ENCODE measurements at regions of chr11 and their contacts with region 1.

Region 1: DNA sequence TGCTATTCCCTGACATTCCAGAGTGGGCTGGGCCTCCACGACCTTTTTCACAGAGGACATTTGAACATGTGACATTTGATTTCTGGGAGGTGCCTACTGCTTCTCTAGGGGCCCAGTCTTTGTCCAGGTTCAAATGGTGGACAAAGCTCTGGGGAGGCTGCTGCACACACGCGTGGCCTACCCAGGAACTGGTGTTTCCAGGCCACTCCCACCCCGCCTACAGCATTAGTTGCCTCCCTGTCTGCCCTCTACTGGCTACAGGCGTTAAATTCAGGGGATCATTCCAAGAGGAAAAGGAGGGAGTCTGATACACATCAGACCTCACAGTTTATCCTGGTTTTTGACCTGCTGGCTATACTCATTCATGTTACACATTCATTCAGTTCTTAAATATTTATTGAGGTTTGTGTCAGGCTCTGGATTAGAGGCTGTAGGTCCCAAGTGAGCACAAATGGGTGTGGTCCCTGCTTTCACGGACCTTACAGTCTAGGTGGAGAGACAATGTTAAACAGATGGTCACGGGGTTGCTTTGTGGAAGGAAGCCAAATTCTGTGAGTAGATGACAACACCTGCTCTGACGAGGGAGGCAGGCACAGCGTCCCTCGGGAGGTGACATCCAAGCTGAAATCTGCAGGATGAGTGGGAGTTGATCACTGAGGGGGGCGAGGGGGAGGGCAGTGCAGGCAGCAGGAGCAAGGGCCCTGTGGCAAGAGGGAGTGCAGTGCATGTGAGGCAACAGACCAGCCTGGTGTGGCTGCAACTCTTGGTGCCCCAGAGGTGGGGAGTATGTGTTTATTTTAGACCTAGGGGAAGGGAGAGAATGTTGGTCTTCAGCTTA is 11.8 kb downstream of the TUB start:
- DNase-seq: peak; percentile 76
- H3K4me3 Mint-ChIP-seq: no peak overlapping the region
- H3K27ac Mint-ChIP-seq: no peak overlapping the region
- H3K4me1 Mint-ChIP-seq: no peaks in the 10 kb centered on the region
- H3K27me3 Mint-ChIP-seq: no peaks in the 10 kb centered on the region
- CTCF ChIP-seq: peak; percentile 50

Region 2: DNA sequence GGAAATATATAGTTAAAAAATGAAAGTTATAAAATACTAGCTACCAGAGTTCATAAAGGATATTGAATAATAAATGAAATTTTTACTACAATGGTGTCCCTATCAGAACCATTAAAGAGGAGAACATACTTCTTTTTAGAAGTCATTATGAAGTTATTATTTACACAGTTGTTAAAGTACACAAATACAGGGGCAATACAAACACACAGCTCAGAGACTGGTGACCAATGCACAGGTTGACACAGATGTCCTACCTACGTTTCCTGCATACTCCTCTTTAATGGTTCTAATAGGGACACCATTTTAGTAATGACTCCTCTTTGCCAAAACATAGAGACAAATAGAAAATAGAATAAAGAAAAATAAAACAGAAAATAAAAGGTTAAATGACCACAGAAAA is 137.6 kb before region 1 on chr11:
- CTCF ChIA-PET with region 1: no interaction called
- POLR2A ChIA-PET with region 1: no interaction called
- intact Hi-C with region 1: no loop called
- DNase-seq: no peak
- H3K4me3 Mint-ChIP-seq: no peak overlapping the region
- H3K27ac Mint-ChIP-seq: no peak overlapping the region
- H3K4me1 Mint-ChIP-seq: no peaks in the 10 kb centered on the region
- H3K27me3 Mint-ChIP-seq: no peaks in the 10 kb centered on the region
- CTCF ChIP-seq: no peak

Region 3: GRCh38 chr11:7965386-7965785 is 127.4 kb before region 1 on chr11 and contains the start of gene NLRP10:
- CTCF ChIA-PET with region 1: no interaction called
- POLR2A ChIA-PET with region 1: no interaction called
- intact Hi-C with region 1: no loop called
- DNase-seq: no peak
- H3K4me3 Mint-ChIP-seq: no peak within 1 kb of the TSS
- H3K27ac Mint-ChIP-seq: peak within 1 kb of the TSS; percentile 50
- H3K4me1 Mint-ChIP-seq: peaks cover 27% of the 10 kb centered on the region
- H3K27me3 Mint-ChIP-seq: no peaks in the 10 kb centered on the region
- CTCF ChIP-seq: no peak
- total RNA-seq, gene NLRP10: 0.42 and 1.3 TPM in 2 replicates

Region 4: GRCh38 chr11:8018484-8019313 is 74.1 kb before region 1 on chr11:
- CTCF ChIA-PET with region 1: interaction called, 64 read pairs
- POLR2A ChIA-PET with region 1: no interaction called
- intact Hi-C with region 1: no loop called
- DNase-seq: no peak
- H3K4me3 Mint-ChIP-seq: peak overlapping the region; percentile 62
- H3K27ac Mint-ChIP-seq: no peak overlapping the region
- H3K4me1 Mint-ChIP-seq: peaks cover 12% of the 10 kb centered on the region
- H3K27me3 Mint-ChIP-seq: peaks cover 47% of the 10 kb centered on the region
- CTCF ChIP-seq: no peak

Region 5: DNA sequence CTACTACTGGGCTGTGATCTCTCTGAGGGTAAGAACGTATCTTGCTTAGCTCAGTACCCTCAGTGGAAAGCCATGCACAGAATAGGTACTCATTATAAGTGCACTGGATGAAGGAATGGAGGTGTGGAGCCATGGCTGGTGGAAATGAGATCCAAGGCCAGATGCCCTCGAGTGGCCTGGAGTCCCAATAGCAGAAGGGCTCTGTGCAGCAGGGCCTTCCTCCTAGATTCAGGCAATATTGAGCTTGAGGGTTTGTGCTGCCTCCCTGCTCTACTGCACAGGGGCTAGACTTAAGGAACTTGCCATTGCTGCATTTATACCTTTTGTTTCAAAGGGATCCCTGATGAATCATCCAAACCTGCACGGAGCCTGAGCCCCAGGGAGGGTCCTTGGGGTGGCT is 45.4 kb before region 1 on chr11:
- CTCF ChIA-PET with region 1: interaction called, 786 read pairs
- POLR2A ChIA-PET with region 1: no interaction called
- intact Hi-C with region 1: no loop called
- DNase-seq: no peak
- H3K4me3 Mint-ChIP-seq: no peak overlapping the region
- H3K27ac Mint-ChIP-seq: no peak overlapping the region
- H3K4me1 Mint-ChIP-seq: no peaks in the 10 kb centered on the region
- H3K27me3 Mint-ChIP-seq: peaks cover 66% of the 10 kb centered on the region
- CTCF ChIP-seq: no peak

Region 6: DNA sequence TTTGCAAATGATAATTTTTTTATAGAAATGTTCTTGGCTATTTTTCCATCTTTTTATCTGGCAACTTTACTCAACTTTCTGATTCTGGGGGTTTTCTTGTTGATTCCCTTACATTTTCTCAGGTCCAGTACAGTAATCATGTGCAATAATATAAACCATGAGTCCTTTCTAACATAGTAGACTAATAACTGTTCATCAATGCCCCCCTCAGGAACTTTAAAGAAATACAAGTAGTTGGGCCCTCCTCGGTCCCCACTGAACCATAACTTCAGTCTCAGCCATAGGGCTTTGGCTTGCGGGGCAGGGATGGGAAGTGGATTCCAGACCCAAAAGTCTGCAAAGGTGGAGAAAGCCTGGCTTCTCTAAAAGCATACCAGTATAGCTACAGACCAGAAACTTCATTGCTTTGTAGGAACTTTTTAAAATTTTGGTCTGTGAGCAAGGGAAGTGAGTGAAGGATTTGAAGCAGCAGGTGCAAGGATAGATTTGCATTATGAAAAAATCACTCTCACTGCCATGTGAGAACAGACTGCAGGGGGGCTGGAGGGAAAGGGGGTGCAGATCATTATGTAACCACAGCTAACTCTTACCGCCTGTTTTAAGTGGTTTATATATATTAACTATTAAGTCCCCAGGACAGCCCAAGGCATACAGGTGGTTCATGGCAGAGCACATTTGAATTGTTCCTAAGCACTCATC is 22.2 kb before region 1 on chr11:
- CTCF ChIA-PET with region 1: interaction called, 29 read pairs
- POLR2A ChIA-PET with region 1: interaction called, 4 read pairs
- intact Hi-C with region 1: no loop called
- DNase-seq: peak; percentile 38
- H3K4me3 Mint-ChIP-seq: no peak overlapping the region
- H3K27ac Mint-ChIP-seq: no peak overlapping the region
- H3K4me1 Mint-ChIP-seq: peaks cover 17% of the 10 kb centered on the region
- H3K27me3 Mint-ChIP-seq: peaks cover 15% of the 10 kb centered on the region
- CTCF ChIP-seq: peak; percentile 18

Measured in MCF 10A (cell line).